Activated naive CD4-positive, alpha-beta T cell treated with anti-CD3 and anti-CD28 coated beads for 36 hours (primary cell): ENCODE measurements at regions of chr12 and their contacts with region 1.

Region 1: GRCh38 chr12:104462931-104463339 is 6.2 kb downstream of the CHST11 start:
- DNase-seq: peak; percentile 65
- H3K4me3 Mint-ChIP-seq: peak overlapping the region; percentile 49
- H3K27ac Mint-ChIP-seq: peak overlapping the region; percentile 84
- H3K4me1 Mint-ChIP-seq: peaks cover 75% of the 10 kb centered on the region
- H3K27me3 Mint-ChIP-seq: no peaks in the 10 kb centered on the region

Region 2: GRCh38 chr12:104420868-104421267 is 42.1 kb before region 1 on chr12:
- CTCF ChIA-PET with region 1: no interaction called
- intact Hi-C with region 1: loop called (anchors 2 kb)
- DNase-seq: peak; percentile 42
- H3K4me3 Mint-ChIP-seq: no peak overlapping the region
- H3K27ac Mint-ChIP-seq: no peak overlapping the region
- H3K4me1 Mint-ChIP-seq: peaks cover 7% of the 10 kb centered on the region
- H3K27me3 Mint-ChIP-seq: no peaks in the 10 kb centered on the region

Region 3: GRCh38 chr12:104478396-104479122 is 15.6 kb after region 1 on chr12:
- CTCF ChIA-PET with region 1: interaction called, 7 read pairs
- intact Hi-C with region 1: loop called (anchors 1 kb)
- DNase-seq: peak; percentile 63
- H3K4me3 Mint-ChIP-seq: peak overlapping the region; percentile 83
- H3K27ac Mint-ChIP-seq: peak overlapping the region; percentile 96
- H3K4me1 Mint-ChIP-seq: peaks cover 68% of the 10 kb centered on the region
- H3K27me3 Mint-ChIP-seq: no peaks in the 10 kb centered on the region

Region 4: DNA sequence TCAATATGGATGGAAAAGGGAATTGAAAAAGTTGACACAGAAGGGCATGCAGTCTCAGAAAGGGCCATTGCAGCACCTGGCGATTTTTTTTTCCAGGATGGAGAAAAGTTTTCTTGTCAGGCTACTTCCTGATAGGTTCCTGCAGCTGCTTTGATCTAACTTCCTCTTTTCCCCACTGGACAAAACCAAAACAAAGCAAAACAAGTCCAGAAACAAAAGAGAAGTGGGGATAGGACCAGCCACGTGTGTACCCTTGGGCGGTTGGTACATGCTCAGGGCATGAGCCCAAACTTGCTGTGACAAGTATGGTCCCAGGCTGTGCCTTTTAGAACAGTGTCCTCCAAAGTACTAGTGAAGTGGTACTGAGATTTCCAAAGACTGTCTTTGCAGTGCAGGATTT is 83.6 kb after region 1 on chr12:
- CTCF ChIA-PET with region 1: no interaction called
- intact Hi-C with region 1: loop called (anchors 2 kb)
- DNase-seq: no peak
- H3K4me3 Mint-ChIP-seq: no peak overlapping the region
- H3K27ac Mint-ChIP-seq: no peak overlapping the region
- H3K4me1 Mint-ChIP-seq: peaks cover 22% of the 10 kb centered on the region
- H3K27me3 Mint-ChIP-seq: no peaks in the 10 kb centered on the region